PC-9 (cell line): ENCODE measurements at regions of chr12 and their contacts with region 1.

Region 1: DNA sequence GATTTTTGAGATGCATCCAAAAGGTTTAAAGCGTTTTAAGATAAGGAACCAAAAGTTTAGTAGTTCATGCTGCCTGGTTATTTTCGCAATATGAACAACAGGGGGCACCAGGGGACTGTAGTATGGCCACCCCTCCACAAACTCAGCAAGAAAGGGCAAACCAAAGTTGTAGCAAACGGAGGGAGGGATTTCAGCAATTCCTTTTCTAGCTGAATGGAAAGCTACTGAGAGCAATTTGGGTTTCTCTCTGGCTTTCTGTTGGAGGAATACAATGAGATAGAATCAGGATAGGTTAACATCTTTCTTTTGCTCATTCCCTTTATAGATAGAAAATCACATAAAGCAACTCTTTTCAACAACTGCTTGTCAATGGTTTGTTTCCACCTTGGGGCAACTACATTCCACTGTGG is 62.5 kb downstream of the DRAM1 start:
- DNase-seq: peak; percentile 39 to 40
- H3K4me3 ChIP-seq: no peak overlapping the region
- H3K27ac ChIP-seq: no peak overlapping the region
- H3K4me1 ChIP-seq: no peaks in the 10 kb centered on the region
- H3K27me3 ChIP-seq: no peaks in the 10 kb centered on the region
- CTCF ChIP-seq: peak; percentile 86

Region 2: DNA sequence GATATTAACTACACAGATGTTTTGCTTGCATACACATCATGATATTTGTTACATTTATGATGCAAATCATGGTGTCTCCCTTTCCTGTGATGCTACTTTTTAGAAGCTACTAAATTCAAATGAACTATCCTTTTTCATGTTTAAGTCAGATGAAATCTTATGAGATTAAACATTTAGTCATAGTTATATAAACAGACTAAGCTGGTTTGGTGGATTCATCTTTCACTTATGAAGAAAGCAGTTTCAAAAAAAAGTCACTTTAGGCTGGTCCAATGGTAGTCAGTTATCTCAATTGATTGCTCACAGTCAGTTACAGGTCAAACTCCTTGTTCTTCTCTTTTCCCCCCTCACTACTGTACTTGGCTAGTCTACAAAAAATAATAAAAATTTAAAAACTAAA is 220.3 kb before region 1 on chr12:
- CTCF ChIA-PET with region 1: no interaction called
- POLR2A ChIA-PET with region 1: no interaction called
- intact Hi-C with region 1: no loop called
- DNase-seq: no peak
- H3K4me3 ChIP-seq: no peak overlapping the region
- H3K27ac ChIP-seq: no peak overlapping the region
- H3K4me1 ChIP-seq: no peaks in the 10 kb centered on the region
- H3K27me3 ChIP-seq: no peaks in the 10 kb centered on the region
- CTCF ChIP-seq: no peak

Region 3: GRCh38 chr12:101773650-101774162 is 166.2 kb before region 1 on chr12:
- CTCF ChIA-PET with region 1: interaction called, 5 read pairs
- POLR2A ChIA-PET with region 1: no interaction called
- intact Hi-C with region 1: loop called (anchors 5 kb)
- DNase-seq: peak; percentile 38 to 42
- H3K4me3 ChIP-seq: no peak overlapping the region
- H3K27ac ChIP-seq: no peak overlapping the region
- H3K4me1 ChIP-seq: no peaks in the 10 kb centered on the region
- H3K27me3 ChIP-seq: no peaks in the 10 kb centered on the region
- CTCF ChIP-seq: peak; percentile 96

Region 4: DNA sequence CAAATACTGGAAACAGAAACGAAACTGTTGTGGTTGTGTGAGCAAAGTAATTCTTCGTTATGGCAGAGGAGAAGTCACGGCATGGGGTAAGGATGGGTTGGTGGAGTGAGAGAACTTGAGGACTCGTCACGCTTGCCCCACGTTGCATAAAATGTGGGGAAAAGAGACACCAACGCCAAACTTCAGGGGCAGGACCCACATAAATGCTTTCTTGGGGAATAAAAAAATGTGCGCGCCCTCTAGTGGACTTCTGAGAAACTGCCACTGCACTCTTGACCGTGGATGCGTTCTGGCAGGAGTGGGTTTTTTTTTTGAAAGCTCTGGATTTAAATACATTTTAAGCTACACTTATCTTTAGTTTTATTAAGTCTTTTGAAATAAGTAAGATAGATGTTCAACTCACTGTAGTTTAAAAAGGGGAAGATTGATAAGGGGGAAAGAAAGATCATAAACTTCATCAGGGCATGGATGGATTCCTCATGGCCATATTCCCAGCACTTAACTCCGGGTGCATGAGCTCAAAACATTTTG is 544.6 kb after region 1 on chr12:
- CTCF ChIA-PET with region 1: no interaction called
- POLR2A ChIA-PET with region 1: no interaction called
- intact Hi-C with region 1: loop called (anchors 10 kb)
- DNase-seq: peak in 1 of 2 experiments; percentile 21
- H3K4me3 ChIP-seq: no peak overlapping the region
- H3K27ac ChIP-seq: no peak overlapping the region
- H3K4me1 ChIP-seq: 0 out of 2 replicates have a peak, but pooled peaks cover 4% of the 10 kb centered on the region
- H3K27me3 ChIP-seq: no peaks in the 10 kb centered on the region
- CTCF ChIP-seq: peak; percentile 95

Region 5: GRCh38 chr12:102769319-102769916 is 829.6 kb after region 1 on chr12:
- CTCF ChIA-PET with region 1: no interaction called
- POLR2A ChIA-PET with region 1: no interaction called
- intact Hi-C with region 1: loop called (anchors 1 kb)
- DNase-seq: peak; percentile 47 to 48
- H3K4me3 ChIP-seq: no peak overlapping the region
- H3K27ac ChIP-seq: no peak overlapping the region
- H3K4me1 ChIP-seq: no peaks in the 10 kb centered on the region
- H3K27me3 ChIP-seq: no peaks in the 10 kb centered on the region
- CTCF ChIP-seq: peak; percentile 78

Region 6: GRCh38 chr12:102879144-102879763 is 939.4 kb after region 1 on chr12:
- CTCF ChIA-PET with region 1: no interaction called
- POLR2A ChIA-PET with region 1: no interaction called
- intact Hi-C with region 1: loop called (anchors 2 kb)
- DNase-seq: peak; percentile 29 to 63
- H3K4me3 ChIP-seq: no peak overlapping the region
- H3K27ac ChIP-seq: no peak overlapping the region
- H3K4me1 ChIP-seq: no peaks in the 10 kb centered on the region
- H3K27me3 ChIP-seq: no peaks in the 10 kb centered on the region
- CTCF ChIP-seq: peak; percentile 59